ENCODE measurements at regions of chr2 and their contacts with region 1.

Region 1: DNA sequence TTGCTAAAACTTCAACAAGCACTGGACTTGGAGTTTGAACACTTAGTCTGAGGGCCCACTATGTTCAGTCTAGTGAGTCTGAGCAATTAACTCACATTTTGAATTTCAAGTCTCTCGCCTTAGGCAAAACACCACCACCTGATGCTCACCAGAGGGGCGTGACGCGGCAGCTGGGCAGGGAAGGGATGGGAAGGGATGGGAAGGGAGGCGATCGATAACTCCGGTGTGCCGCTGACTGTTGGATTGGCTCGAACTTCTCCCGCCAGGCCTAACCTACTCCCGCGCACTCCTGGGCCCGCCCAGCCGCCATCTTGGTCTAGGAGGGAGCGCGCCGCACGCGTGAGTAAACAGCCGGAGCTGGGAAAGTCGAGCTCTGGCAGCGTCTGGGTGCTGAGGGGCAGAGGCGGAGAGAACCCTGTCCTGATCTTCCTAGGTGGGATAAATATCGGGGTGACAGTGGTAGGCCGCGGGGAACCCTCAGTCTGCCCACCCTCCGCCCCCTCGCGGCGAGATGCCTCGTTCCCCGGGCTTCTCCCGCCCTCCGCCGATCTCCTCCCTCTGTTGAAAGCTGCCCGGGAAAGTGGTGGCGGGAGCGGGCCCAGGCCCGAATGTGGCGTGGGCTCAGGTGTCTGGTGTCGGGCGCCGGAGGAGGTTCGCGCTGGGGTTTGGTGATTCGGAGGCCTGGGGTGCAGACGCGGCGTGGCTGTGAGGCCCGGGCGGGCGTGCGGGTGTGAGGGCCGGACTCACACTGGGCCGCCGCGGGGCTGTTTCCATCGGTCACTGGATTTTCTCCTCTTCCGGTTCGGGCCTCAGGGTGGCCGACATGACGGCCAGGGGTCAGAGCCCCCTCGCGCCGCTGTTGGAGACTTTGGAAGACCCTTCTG is at the start of gene RIF1:
- DNase-seq: peak; percentile 91
- ATAC-seq: peak; percentile 97
- H3K4me3 Mint-ChIP-seq: peak within 1 kb of the TSS; percentile 97
- H3K27ac Mint-ChIP-seq: peak within 1 kb of the TSS; percentile 98
- H3K4me1 Mint-ChIP-seq: peaks cover 28% of the 10 kb centered on the region
- H3K27me3 Mint-ChIP-seq: no peaks in the 10 kb centered on the region
- total RNA-seq, gene RIF1: 55.7 to 67.1 TPM

Region 2: DNA sequence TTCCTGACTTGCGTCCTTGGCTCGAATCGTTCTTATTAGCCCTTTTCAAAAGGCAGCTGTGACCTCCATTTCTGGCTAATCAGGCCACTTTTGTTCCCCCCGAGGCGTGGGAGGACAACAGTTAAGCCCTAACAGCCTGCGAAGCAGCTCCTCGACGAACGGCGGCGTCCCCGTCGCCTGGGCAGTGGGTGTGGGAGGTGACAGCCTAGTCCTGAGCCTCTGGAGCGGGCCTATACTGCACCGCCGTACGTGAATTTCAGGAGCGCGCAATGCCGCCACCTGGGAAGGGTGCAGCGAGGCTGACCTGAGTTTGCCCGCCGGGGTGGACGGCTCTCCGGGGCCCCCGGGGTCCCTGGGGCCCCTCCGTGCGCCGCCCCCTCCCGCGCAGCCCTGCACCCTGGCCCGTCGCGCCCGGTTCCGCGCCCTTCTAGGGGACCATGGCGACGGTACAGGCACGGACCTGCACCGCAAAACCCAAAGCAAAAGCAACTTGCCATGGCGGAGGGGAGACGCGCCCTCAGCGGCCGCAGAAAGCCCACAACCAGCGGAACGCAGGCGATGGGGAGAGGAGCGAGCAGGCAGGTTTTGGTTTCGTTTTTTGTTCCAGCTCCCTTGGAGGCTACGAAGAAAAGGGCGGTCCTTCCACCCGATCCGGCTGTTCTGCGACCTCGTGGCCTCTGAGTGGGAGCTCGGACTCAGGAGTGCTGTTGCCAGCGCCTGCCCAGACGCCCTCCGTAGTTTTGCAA is 148.4 kb before region 1 on chr2 and contains the start of gene RBM43:
- CTCF ChIA-PET with region 1: interaction called, 4 read pairs
- POLR2A ChIA-PET with region 1: no interaction called
- intact Hi-C with region 1: loop called (anchors 1 kb)
- DNase-seq: peak; percentile 88
- ATAC-seq: peak; percentile 92
- H3K4me3 Mint-ChIP-seq: peak within 1 kb of the TSS; percentile 89
- H3K27ac Mint-ChIP-seq: peak within 1 kb of the TSS; percentile 98
- H3K4me1 Mint-ChIP-seq: peaks cover 18% of the 10 kb centered on the region
- H3K27me3 Mint-ChIP-seq: no peaks in the 10 kb centered on the region
- total RNA-seq, gene RBM43: 5.7 to 5.8 TPM

Region 3: GRCh38 chr2:151508519-151508918 is 98.7 kb after region 1 on chr2:
- CTCF ChIA-PET with region 1: no interaction called
- POLR2A ChIA-PET with region 1: no interaction called
- intact Hi-C with region 1: no loop called
- DNase-seq: no peak
- ATAC-seq: no peak
- H3K4me3 Mint-ChIP-seq: no peak overlapping the region
- H3K27ac Mint-ChIP-seq: no peak overlapping the region
- H3K4me1 Mint-ChIP-seq: no peaks in the 10 kb centered on the region
- H3K27me3 Mint-ChIP-seq: no peaks in the 10 kb centered on the region

Region 4: GRCh38 chr2:151792589-151792988 is 382.7 kb after region 1 on chr2:
- CTCF ChIA-PET with region 1: no interaction called
- POLR2A ChIA-PET with region 1: no interaction called
- intact Hi-C with region 1: no loop called
- DNase-seq: no peak
- ATAC-seq: no peak
- H3K4me3 Mint-ChIP-seq: no peak overlapping the region
- H3K27ac Mint-ChIP-seq: no peak overlapping the region
- H3K4me1 Mint-ChIP-seq: no peaks in the 10 kb centered on the region
- H3K27me3 Mint-ChIP-seq: no peaks in the 10 kb centered on the region

Measured in activated CD4-positive, alpha-beta T cell treated with anti-CD3 and anti-CD28 coated beads for 36 hours (primary cell).